Activated CD8-positive, alpha-beta memory T cell treated with anti-CD3 and anti-CD28 coated beads, Interleukin-2, amount 10 ng/mL, durations not matched to agents 7 days and 5 days (primary cell): ENCODE measurements at regions of chr9 and their contacts with region 1.

Region 1: DNA sequence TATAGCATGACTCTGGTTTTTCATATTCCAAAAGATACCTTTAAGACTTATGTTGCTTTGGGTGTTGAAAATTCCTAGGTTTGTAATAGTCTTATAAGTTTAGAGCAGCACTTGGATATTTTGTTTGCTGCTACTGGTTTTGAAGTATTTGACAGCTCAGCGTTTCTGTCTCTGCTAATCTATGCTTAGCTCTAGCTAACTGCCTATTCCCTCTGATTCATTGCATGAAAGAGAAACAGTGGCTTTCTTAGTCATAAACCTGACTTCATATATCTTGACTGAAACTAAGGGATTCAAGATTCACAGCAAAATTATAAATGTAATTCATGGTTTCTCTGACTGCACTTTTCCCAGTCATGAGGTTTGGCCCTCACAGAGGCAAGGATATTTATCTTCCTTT is 35.6 kb upstream of the ANXA1 start:
- DNase-seq: no peak
- ATAC-seq: peak; percentile 93
- H3K4me3 Mint-ChIP-seq: no peak overlapping the region
- H3K27ac Mint-ChIP-seq: no peak overlapping the region
- H3K4me1 Mint-ChIP-seq: peaks cover 34% of the 10 kb centered on the region
- H3K27me3 Mint-ChIP-seq: no peaks in the 10 kb centered on the region

Region 2: GRCh38 chr9:73011181-73011750 is 104.8 kb before region 1 on chr9:
- CTCF ChIA-PET with region 1: no interaction called
- DNase-seq: no peak
- ATAC-seq: no peak
- H3K4me3 Mint-ChIP-seq: no peak overlapping the region
- H3K27ac Mint-ChIP-seq: no peak overlapping the region
- H3K4me1 Mint-ChIP-seq: no peaks in the 10 kb centered on the region
- H3K27me3 Mint-ChIP-seq: peaks cover 41% of the 10 kb centered on the region

Region 3: DNA sequence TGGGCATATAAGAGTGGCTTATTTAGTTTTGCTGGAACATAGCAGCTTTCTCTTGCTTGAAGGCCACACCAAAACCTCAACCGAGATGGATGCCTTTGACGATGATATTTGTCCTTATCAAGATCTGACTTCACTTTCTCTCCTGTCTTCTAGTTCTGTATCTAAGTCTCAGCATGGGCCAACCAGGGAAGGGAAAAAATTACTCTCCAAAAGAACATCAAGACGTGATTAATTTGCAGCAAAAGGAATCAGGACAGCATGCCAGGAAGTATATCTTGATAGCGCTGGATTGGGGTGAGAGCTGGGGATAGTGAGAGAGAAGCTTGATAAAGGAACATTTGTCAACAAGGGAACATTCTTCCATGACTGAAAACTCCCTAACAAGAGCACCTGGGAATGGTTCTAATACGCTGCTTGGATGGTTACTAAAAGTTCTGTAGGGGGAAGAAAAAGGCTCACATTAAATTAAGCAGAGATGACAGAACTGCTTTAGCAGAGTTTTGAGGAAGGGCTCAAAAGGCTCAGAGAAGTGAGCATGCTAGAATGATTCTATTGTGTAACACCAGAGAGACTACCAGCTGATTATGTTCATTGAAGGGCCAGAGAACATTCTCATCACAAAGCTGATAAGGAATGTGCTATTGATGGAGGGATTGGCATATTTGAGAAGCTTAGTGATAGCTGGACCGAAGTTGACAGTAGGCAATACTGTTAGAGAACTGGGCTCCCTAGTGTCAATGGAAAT is 14.1 kb after region 1 on chr9:
- CTCF ChIA-PET with region 1: interaction called, 11 read pairs
- DNase-seq: no peak
- ATAC-seq: no peak
- H3K4me3 Mint-ChIP-seq: no peak overlapping the region
- H3K27ac Mint-ChIP-seq: no peak overlapping the region
- H3K4me1 Mint-ChIP-seq: peaks cover 29% of the 10 kb centered on the region
- H3K27me3 Mint-ChIP-seq: no peaks in the 10 kb centered on the region

Region 4: DNA sequence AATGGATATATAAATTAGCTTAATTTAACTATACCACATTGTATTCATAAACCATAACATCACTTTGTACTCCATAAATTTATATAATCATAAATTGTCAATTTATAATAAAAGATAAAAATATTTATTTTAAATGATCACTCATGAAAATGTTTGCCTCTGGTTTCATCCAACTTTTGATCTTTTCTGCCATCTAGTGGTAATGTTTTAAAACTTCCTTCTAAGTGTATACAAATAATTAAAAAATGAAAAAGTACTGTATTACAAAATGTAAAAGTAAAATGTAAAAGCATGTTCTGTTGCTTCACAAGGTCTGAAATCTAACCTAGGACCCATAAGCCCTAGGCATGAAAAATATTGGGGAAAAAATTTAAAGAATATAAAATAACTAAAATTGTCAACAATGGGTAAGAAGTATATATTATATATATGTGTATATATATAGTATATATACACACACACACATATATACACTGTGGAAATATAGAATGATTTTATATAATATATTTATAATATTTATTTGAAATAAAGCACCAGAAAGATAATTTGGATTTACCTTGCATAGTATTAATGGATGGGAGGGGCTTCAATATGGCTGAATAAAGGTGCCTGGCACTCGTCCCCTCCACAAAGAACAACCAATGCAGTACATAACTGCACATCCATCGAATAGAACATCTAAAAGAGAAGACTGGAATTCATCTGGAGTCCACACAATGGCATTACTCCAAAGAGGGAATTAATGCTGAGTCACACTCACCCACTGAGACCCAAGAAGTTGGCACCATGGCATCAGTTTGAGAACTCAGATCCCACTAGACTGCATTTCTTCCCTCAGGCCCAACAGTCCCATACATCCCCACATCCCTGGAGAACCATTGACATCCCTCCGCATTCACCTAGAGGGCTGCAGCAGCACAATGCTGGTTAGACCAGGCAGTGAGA is 68.2 kb after region 1 on chr9:
- CTCF ChIA-PET with region 1: interaction called, 70 read pairs
- DNase-seq: no peak
- ATAC-seq: no peak
- H3K4me3 Mint-ChIP-seq: no peak overlapping the region
- H3K27ac Mint-ChIP-seq: no peak overlapping the region
- H3K4me1 Mint-ChIP-seq: peaks cover 2% of the 10 kb centered on the region
- H3K27me3 Mint-ChIP-seq: peaks cover 26% of the 10 kb centered on the region

Region 5: DNA sequence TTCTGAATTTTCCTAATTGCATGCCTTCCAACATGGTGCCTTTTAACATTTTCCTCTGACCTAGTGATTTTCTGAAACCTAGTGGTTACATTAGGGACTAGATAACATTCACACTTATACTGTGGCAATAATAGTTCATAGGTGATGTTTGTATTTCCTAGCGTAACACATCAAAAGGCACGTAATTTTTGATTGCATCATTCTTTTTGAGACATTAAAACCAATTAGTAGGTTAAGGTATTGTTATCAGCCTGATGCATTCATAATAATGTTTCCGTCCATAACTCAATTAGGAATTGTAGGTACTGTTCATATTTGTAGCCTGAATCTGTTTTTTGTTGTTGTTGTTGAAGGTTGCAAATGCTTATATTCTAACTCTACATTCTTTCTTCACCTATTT is 228.0 kb after region 1 on chr9:
- CTCF ChIA-PET with region 1: no interaction called
- DNase-seq: no peak
- ATAC-seq: no peak
- H3K4me3 Mint-ChIP-seq: no peak overlapping the region
- H3K27ac Mint-ChIP-seq: no peak overlapping the region
- H3K4me1 Mint-ChIP-seq: no peaks in the 10 kb centered on the region
- H3K27me3 Mint-ChIP-seq: no peaks in the 10 kb centered on the region